Left cardiac atrium (tissue), 4 donors: ENCODE measurements at regions of chr14 and their contacts with region 1.

Region 1: GRCh38 chr14:67943947-67944346 is 124.4 kb downstream of the RAD51B start:
- DNase-seq: peak; percentile 72
- ATAC-seq: peak; percentile 69 to 75

Region 2: DNA sequence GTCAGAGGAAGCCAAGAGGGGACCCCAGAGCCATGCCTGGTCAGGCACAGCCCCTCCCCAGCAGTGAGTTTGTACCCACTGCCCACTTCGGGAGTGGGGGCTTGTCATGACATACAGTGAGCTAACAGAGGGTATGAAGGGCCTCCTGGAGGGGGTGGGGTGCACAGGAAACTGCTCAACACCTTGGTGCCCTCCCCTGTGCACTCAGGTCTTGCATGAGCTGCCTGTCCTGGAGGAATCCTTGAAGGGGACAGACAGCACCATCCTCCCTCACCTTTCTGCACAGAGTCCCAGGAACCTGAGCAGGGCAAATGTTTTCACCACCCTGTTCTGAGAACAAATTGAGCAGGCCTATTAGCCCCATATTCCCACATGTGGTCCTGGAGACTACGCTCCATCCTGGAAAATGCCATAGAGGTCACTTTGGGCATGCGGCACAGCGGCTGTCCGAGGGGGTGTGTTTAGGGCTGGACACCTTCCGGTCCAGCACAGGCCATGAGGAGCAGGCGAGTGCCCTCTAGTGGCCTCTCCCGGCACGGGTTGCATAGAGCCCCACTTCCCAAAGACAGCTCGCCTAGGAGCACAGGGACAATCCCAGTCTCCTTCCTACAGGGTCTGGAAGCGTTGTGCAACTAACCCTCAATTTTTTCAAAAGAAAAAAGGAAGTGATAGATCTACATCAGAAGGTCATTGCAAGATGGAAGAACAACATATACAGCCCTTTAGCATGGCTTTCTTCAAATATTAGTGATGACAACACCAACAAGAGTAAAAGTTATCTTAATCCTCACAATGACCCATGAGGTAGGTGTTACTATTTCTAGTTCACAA is 880.8 kb after region 1 on chr14:
- intact Hi-C with region 1: loop called in 1 of 2 experiments (anchors 5 kb)
- DNase-seq: peak; percentile 89
- ATAC-seq: peak; percentile 93 to 97